ENCODE measurements at regions of chr20 and their contacts with region 1.

Region 1: GRCh38 chr20:24948939-24949679 is at the start of gene CST7:
- DNase-seq: peak; percentile 95
- H3K4me3 Mint-ChIP-seq: peak within 1 kb of the TSS; percentile 95
- H3K27ac Mint-ChIP-seq: peak within 1 kb of the TSS; percentile 98
- H3K4me1 Mint-ChIP-seq: peaks cover 67% of the 10 kb centered on the region
- H3K27me3 Mint-ChIP-seq: no peaks in the 10 kb centered on the region
- total RNA-seq, gene CST7: 115 and 117 TPM in 2 replicates

Region 2: GRCh38 chr20:24027229-24027628 is 921.9 kb before region 1 on chr20:
- intact Hi-C with region 1: loop called (anchors 2 kb)
- DNase-seq: peak; percentile 95
- H3K4me3 Mint-ChIP-seq: peak overlapping the region; percentile 66
- H3K27ac Mint-ChIP-seq: peak overlapping the region; percentile 94
- H3K4me1 Mint-ChIP-seq: peaks cover 42% of the 10 kb centered on the region
- H3K27me3 Mint-ChIP-seq: no peaks in the 10 kb centered on the region

Region 3: GRCh38 chr20:24545168-24545567 is 403.9 kb before region 1 on chr20:
- intact Hi-C with region 1: no loop called
- DNase-seq: no peak
- H3K4me3 Mint-ChIP-seq: no peak overlapping the region
- H3K27ac Mint-ChIP-seq: no peak overlapping the region
- H3K4me1 Mint-ChIP-seq: no peaks in the 10 kb centered on the region
- H3K27me3 Mint-ChIP-seq: peaks cover 4% of the 10 kb centered on the region

Region 4: GRCh38 chr20:24823989-24824693 is 125.0 kb before region 1 on chr20:
- intact Hi-C with region 1: no loop called
- DNase-seq: no peak
- H3K4me3 Mint-ChIP-seq: no peak overlapping the region
- H3K27ac Mint-ChIP-seq: no peak overlapping the region
- H3K4me1 Mint-ChIP-seq: no peaks in the 10 kb centered on the region
- H3K27me3 Mint-ChIP-seq: no peaks in the 10 kb centered on the region

Region 5: GRCh38 chr20:24934101-24934661 is 14.9 kb before region 1 on chr20:
- intact Hi-C with region 1: loop called (anchors 2 kb)
- DNase-seq: no peak
- H3K4me3 Mint-ChIP-seq: no peak overlapping the region
- H3K27ac Mint-ChIP-seq: no peak overlapping the region
- H3K4me1 Mint-ChIP-seq: peaks cover 45% of the 10 kb centered on the region
- H3K27me3 Mint-ChIP-seq: no peaks in the 10 kb centered on the region

Region 6: DNA sequence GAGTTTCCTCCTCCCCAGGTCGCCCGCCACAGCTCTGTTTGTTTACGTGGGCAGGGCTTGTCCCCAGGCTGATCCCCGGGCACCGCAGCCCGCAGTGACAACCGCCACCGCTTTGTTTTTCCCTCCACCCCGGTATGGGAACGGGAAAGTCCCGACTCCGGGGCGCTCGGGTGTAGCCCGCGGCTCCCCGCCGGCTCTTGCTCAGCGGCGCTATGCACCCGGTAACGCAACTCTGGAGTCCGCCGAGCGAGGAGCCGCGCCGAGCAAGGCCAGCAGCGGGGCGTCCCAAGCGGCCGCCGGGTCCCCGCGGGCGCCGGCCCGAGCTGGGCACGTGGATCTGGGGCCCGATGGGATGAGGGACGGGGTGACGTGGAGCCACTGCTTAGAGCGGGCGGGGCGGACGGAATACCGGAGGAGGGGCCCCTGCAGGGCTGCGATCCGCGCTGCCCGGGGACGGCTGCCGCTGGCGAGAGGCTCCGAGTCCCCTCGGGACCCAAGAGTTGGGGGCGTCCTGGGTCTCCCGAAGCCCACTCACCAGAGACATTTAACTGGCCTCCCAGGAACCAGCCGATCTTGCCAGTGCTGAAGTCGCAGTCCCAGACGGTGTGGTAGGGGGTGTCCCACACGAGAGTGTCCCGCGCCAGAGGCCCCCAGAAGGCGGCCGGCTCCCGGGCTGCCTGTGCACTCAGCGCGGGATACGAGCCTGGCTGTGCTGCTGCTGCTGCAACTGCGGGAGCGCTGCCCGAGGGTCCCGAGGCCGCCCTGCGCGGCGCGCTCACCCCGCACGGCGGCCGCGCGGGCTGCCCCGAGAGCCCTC is 108.3 kb after region 1 on chr20:
- intact Hi-C with region 1: loop called (anchors 2 kb)
- DNase-seq: peak; percentile 95
- H3K4me3 Mint-ChIP-seq: peak overlapping the region; percentile 78
- H3K27ac Mint-ChIP-seq: peak overlapping the region; percentile 65
- H3K4me1 Mint-ChIP-seq: peaks cover 39% of the 10 kb centered on the region
- H3K27me3 Mint-ChIP-seq: peaks cover 37% of the 10 kb centered on the region

Region 7: DNA sequence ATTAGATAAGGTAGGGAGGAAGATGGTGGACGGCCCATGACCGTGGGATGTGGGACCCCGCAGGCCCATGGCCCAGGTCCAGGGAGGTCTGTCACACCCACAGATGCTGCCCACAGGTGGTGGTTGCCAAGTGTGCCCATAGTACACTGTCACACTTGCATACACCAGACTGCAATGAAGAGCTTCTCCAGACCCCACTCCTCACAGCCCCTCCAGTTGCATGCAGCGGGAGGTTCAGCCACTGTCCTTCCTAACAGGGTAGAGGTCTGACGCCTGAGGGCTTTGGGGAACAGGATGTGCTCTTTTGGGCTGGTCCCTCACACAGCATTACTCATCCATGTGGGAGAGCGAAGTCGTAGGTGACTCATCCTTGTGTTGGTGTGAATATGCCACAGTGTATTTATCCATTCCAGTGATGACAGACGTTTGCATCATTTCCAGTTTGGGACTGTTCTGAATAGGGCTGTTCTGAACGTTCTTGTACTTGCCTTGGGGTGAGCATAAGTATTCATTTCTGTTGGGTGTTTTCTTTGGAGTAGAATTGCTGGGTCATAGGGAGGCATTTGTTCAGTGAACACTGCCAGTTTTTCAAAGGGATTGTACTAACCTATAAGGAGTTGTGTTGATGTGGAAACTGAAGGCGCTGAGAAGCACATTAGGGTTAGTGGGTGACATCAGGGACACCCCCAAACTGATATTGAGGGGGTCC is 288.7 kb after region 1 on chr20:
- intact Hi-C with region 1: loop called (anchors 5 kb)
- DNase-seq: peak; percentile 81
- H3K4me3 Mint-ChIP-seq: peak overlapping the region; percentile 55
- H3K27ac Mint-ChIP-seq: peak overlapping the region; percentile 91
- H3K4me1 Mint-ChIP-seq: peaks cover 22% of the 10 kb centered on the region
- H3K27me3 Mint-ChIP-seq: peaks cover under 1% of the 10 kb centered on the region

Region 8: DNA sequence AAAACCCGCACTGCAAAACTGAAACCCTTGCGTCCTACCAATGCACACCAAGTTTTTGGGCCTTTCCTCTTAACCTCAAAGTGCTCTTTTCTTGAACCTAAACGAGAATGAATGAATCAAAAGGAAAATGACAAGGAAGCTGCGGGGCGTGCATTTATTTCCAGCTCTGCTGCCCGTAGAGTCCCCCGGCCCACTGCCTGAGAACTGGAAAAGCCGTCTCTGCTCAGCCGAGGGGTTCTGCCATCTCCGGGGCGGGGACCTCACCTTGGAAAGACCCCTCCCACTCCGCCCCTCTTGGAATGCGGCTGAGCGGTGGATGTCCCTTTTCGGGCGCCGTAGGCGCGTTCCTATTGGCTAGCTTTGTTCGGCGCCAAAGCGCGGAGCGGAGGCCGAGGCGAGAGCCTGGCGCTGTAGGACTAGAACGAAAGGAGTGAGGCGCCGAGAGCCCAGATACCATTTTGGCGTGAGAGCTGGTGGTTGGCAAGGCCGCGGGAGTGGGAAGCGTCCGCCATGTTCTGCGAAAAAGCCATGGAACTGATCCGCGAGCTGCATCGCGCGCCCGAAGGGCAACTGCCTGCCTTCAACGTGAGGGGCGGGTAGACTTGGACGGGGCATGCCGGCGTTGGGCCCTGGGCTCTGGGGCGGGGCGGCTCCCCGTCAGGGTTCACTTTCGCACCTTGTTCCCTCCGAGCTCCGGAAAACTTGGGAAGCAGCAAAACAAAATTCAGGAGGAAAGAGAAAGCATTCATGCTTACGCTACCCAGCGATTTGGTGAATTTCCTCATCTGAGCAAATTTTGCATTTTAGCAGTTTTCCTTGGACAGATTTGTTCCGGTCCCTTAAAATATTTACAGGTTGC is 458.4 kb after region 1 on chr20 and contains the start of gene GINS1:
- intact Hi-C with region 1: loop called (anchors 1 kb)
- DNase-seq: peak; percentile 96
- H3K4me3 Mint-ChIP-seq: peak within 1 kb of the TSS; percentile 90
- H3K27ac Mint-ChIP-seq: peak within 1 kb of the TSS; percentile 95
- H3K4me1 Mint-ChIP-seq: peaks cover 19% of the 10 kb centered on the region
- H3K27me3 Mint-ChIP-seq: no peaks in the 10 kb centered on the region
- total RNA-seq, gene GINS1: 43.0 and 43.2 TPM in 2 replicates